ENCODE measurements at regions of chr19 and their contacts with region 1.

Region 1: GRCh38 chr19:17947815-17948513 is 15.1 kb downstream of the CCDC124 start:
- DNase-seq: peak; percentile 98
- ATAC-seq: peak; percentile 61
- H3K4me3 Mint-ChIP-seq: peak overlapping the region; percentile 70
- H3K27ac Mint-ChIP-seq: no peak overlapping the region
- H3K4me1 Mint-ChIP-seq: peaks cover 50% of the 10 kb centered on the region
- H3K27me3 Mint-ChIP-seq: peaks cover 33% of the 10 kb centered on the region

Region 2: GRCh38 chr19:17873786-17874757 is 73.9 kb before region 1 on chr19:
- CTCF ChIA-PET with region 1: interaction called, 3 read pairs
- POLR2A ChIA-PET with region 1: no interaction called
- intact Hi-C with region 1: loop called (anchors 5 kb)
- DNase-seq: peak; percentile 89
- ATAC-seq: peak; percentile 83
- H3K4me3 Mint-ChIP-seq: peak overlapping the region; percentile 78
- H3K27ac Mint-ChIP-seq: peak overlapping the region; percentile 25
- H3K4me1 Mint-ChIP-seq: peaks cover 17% of the 10 kb centered on the region
- H3K27me3 Mint-ChIP-seq: no peaks in the 10 kb centered on the region

Region 3: DNA sequence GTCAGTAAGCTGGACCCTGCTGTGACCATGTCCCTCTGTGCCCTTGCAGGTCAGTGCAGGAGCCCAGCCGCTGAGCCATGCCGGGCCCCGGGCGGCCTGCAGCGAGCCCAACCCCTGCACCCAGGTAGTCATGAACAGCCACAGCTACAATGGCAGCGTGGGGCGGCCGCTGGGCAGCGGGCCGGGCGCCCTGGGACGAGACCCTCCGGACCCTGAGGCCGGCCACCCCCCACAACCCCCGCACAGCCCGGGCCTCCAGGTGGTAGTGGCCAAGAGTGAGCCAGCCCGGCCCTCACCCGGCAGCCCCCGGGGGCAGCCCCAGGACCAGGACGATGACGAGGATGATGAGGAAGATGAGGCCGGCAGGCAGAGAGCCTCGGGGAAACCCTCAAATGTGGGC is 25.8 kb after region 1 on chr19:
- CTCF ChIA-PET with region 1: no interaction called
- POLR2A ChIA-PET with region 1: no interaction called
- intact Hi-C with region 1: no loop called
- DNase-seq: no peak
- ATAC-seq: no peak
- H3K4me3 Mint-ChIP-seq: no peak overlapping the region
- H3K27ac Mint-ChIP-seq: no peak overlapping the region
- H3K4me1 Mint-ChIP-seq: no peaks in the 10 kb centered on the region
- H3K27me3 Mint-ChIP-seq: no peaks in the 10 kb centered on the region

Region 4: GRCh38 chr19:18000935-18001778 is 53.2 kb after region 1 on chr19:
- CTCF ChIA-PET with region 1: interaction called, 76 read pairs
- POLR2A ChIA-PET with region 1: no interaction called
- intact Hi-C with region 1: loop called (anchors 1 to 2 kb)
- DNase-seq: peak; percentile 95
- ATAC-seq: peak; percentile 84
- H3K4me3 Mint-ChIP-seq: peak overlapping the region; percentile 85
- H3K27ac Mint-ChIP-seq: peak overlapping the region; percentile 95
- H3K4me1 Mint-ChIP-seq: peaks cover 25% of the 10 kb centered on the region
- H3K27me3 Mint-ChIP-seq: no peaks in the 10 kb centered on the region

Region 5: GRCh38 chr19:18058208-18059030 is 110.5 kb after region 1 on chr19:
- CTCF ChIA-PET with region 1: interaction called, 3 read pairs
- POLR2A ChIA-PET with region 1: no interaction called
- intact Hi-C with region 1: loop called (anchors 2 kb)
- DNase-seq: peak; percentile 91
- ATAC-seq: peak; percentile 92
- H3K4me3 Mint-ChIP-seq: no peak overlapping the region
- H3K27ac Mint-ChIP-seq: peak overlapping the region; percentile 74
- H3K4me1 Mint-ChIP-seq: peaks cover 9% of the 10 kb centered on the region
- H3K27me3 Mint-ChIP-seq: no peaks in the 10 kb centered on the region

Region 6: DNA sequence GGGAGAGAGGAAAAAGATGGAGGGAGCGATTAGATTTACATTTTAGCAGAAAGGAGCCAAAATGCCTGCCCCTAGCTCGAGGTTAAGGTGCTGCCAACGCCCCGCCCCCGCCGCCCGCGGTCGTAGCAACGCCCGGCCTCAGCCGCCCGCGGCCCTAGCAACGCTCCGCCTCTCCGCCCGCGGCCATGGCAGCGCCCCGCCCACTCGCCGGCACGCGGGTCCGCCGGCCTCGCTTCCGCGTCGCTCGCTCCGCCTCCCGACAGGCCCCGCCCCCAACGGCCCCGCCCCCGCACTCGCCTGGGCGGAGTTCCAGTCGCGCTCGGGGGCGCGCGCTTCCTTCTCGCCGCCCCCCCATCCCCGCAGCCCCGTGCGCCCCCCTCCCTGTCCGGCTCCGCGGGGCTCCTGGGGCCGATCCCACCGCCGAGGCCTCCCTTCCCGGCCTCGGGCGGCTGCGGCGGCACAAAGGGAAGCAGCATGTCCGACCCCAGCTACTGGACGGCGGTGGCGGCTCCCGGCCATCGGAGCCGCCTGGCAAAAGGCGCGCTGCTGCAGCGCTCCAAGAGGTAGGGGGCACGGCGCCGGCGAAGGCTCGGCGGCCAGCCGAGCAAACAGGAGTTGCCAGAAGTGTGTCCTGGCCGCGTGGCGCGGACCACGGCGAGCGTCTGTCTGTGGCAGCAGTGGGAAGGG is 169.9 kb after region 1 on chr19:
- CTCF ChIA-PET with region 1: no interaction called
- POLR2A ChIA-PET with region 1: no interaction called
- intact Hi-C with region 1: loop called in 1 of 2 experiments (anchors 1 kb)
- DNase-seq: peak; percentile 97
- ATAC-seq: peak; percentile 79
- H3K4me3 Mint-ChIP-seq: peak overlapping the region; percentile 74
- H3K27ac Mint-ChIP-seq: peak overlapping the region; percentile 84
- H3K4me1 Mint-ChIP-seq: peaks cover 35% of the 10 kb centered on the region
- H3K27me3 Mint-ChIP-seq: no peaks in the 10 kb centered on the region

Region 7: GRCh38 chr19:18291590-18292461 is 343.9 kb after region 1 on chr19:
- CTCF ChIA-PET with region 1: no interaction called
- POLR2A ChIA-PET with region 1: no interaction called
- intact Hi-C with region 1: loop called in 1 of 2 experiments (anchors 5 kb)
- DNase-seq: peak; percentile 96
- ATAC-seq: peak; percentile 38
- H3K4me3 Mint-ChIP-seq: peak overlapping the region; percentile 87
- H3K27ac Mint-ChIP-seq: peak overlapping the region; percentile 99
- H3K4me1 Mint-ChIP-seq: peaks cover 63% of the 10 kb centered on the region
- H3K27me3 Mint-ChIP-seq: no peaks in the 10 kb centered on the region